Activated CD4-positive, alpha-beta memory T cell treated with anti-CD3 and anti-CD28 coated beads for 36 hours (primary cell): ENCODE measurements at regions of chr14 and their contacts with region 1.

Region 1: GRCh38 chr14:92585981-92586937 is 72.7 kb downstream of the RIN3 start:
- DNase-seq: peak; percentile 34
- H3K4me3 Mint-ChIP-seq: peak overlapping the region; percentile 25
- H3K27ac Mint-ChIP-seq: peak overlapping the region; percentile 66
- H3K4me1 Mint-ChIP-seq: peaks cover 69% of the 10 kb centered on the region
- H3K27me3 Mint-ChIP-seq: no peaks in the 10 kb centered on the region

Region 2: GRCh38 chr14:92340931-92341330 is 245.3 kb before region 1 on chr14:
- CTCF ChIA-PET with region 1: no interaction called
- POLR2A ChIA-PET with region 1: no interaction called
- intact Hi-C with region 1: loop called (anchors 2 kb)
- DNase-seq: peak; percentile 86
- H3K4me3 Mint-ChIP-seq: peak overlapping the region; percentile 28
- H3K27ac Mint-ChIP-seq: peak overlapping the region; percentile 83
- H3K4me1 Mint-ChIP-seq: peaks cover 29% of the 10 kb centered on the region
- H3K27me3 Mint-ChIP-seq: peaks cover 56% of the 10 kb centered on the region

Region 3: GRCh38 chr14:92426191-92426590 is 160.1 kb before region 1 on chr14:
- CTCF ChIA-PET with region 1: no interaction called
- POLR2A ChIA-PET with region 1: no interaction called
- intact Hi-C with region 1: no loop called
- DNase-seq: no peak
- H3K4me3 Mint-ChIP-seq: no peak overlapping the region
- H3K27ac Mint-ChIP-seq: no peak overlapping the region
- H3K4me1 Mint-ChIP-seq: peaks cover 4% of the 10 kb centered on the region
- H3K27me3 Mint-ChIP-seq: peaks cover 2% of the 10 kb centered on the region

Region 4: GRCh38 chr14:92450351-92451070 is 135.7 kb before region 1 on chr14:
- CTCF ChIA-PET with region 1: no interaction called
- POLR2A ChIA-PET with region 1: no interaction called
- intact Hi-C with region 1: no loop called
- DNase-seq: no peak
- H3K4me3 Mint-ChIP-seq: no peak overlapping the region
- H3K27ac Mint-ChIP-seq: no peak overlapping the region
- H3K4me1 Mint-ChIP-seq: no peaks in the 10 kb centered on the region
- H3K27me3 Mint-ChIP-seq: no peaks in the 10 kb centered on the region

Region 5: DNA sequence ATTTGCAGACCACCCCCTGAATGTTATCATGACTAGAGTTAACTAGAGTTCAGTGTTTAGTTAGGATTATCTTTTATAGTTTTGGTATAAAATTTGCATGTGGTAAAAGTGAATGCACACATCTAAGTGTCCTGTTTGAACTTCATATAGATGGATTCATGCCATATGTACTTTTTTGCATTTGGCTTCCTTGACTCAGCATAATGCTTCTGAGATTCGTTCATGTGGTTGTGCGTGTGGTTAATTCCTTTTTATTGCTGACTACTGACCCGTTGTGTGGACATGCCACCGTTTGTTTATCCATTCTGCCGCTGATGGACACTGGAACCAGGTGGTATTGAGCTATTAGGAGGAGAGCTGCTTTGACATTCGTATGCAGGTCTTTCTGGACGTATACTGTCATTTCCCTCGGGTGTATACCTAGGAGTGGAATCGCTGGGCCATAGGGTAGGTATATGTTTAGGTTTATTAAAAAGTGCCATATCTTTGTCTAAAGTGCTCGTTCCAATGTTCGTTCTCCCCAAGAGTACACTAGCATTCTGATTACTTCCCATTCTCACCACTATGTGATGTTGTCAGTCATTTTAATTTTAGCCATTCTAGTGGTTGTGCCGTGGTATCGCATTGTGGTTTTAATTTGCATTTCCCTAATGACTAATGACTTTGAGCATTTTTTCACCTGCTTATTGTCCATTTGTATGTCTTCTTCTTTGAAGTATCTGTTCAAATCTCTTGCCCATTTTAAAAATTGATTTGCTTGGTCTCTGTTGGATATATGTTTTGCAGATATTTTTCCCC is 35.0 kb before region 1 on chr14:
- CTCF ChIA-PET with region 1: interaction called, 3 read pairs
- POLR2A ChIA-PET with region 1: interaction called, 3 read pairs
- intact Hi-C with region 1: loop called (anchors 5 kb)
- DNase-seq: no peak
- H3K4me3 Mint-ChIP-seq: no peak overlapping the region
- H3K27ac Mint-ChIP-seq: no peak overlapping the region
- H3K4me1 Mint-ChIP-seq: peaks cover 24% of the 10 kb centered on the region
- H3K27me3 Mint-ChIP-seq: peaks cover 4% of the 10 kb centered on the region

Region 6: GRCh38 chr14:92563359-92563758 is 22.9 kb before region 1 on chr14:
- CTCF ChIA-PET with region 1: no interaction called
- POLR2A ChIA-PET with region 1: interaction called, 6 read pairs
- intact Hi-C with region 1: loop called (anchors 1 kb)
- DNase-seq: peak; percentile 33
- H3K4me3 Mint-ChIP-seq: no peak overlapping the region
- H3K27ac Mint-ChIP-seq: no peak overlapping the region
- H3K4me1 Mint-ChIP-seq: peaks cover 23% of the 10 kb centered on the region
- H3K27me3 Mint-ChIP-seq: no peaks in the 10 kb centered on the region

Region 7: GRCh38 chr14:92633274-92633616 is 47.0 kb after region 1 on chr14:
- CTCF ChIA-PET with region 1: no interaction called
- POLR2A ChIA-PET with region 1: no interaction called
- intact Hi-C with region 1: no loop called
- DNase-seq: no peak
- H3K4me3 Mint-ChIP-seq: no peak overlapping the region
- H3K27ac Mint-ChIP-seq: no peak overlapping the region
- H3K4me1 Mint-ChIP-seq: peaks cover 5% of the 10 kb centered on the region
- H3K27me3 Mint-ChIP-seq: no peaks in the 10 kb centered on the region

Region 8: DNA sequence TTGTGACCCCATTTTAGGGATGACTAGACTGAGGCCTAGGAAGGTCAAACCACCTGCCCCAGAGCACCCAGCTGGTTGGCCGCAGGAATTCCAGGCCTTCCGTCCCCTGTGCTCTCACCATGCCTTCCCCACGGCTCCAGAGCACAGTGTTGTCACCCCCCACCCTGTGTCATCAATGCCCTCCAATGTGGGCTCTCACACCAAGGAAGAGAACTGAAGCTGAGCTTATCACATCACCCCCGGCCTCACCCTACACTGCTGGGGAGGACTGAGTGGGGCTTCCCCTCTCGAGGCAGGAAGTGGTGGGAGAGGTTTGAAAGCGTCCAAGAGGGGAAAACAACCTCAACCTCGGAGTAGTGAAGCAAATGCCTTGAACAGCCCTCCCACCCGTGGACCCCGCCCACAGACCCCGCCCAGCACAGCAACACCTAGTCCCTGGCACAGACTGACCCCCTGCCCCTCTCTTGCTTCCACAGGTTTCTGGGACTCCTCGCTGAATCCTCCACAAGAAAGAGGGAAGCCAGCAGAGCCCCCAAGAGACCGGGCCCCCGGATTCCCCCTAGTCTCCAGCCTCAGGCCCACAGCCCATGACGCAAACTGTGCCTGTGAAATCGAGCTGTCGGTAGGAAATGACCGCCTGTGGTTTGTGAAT is 65.0 kb after region 1 on chr14:
- CTCF ChIA-PET with region 1: interaction called, 5 read pairs
- POLR2A ChIA-PET with region 1: interaction called, 3 read pairs
- intact Hi-C with region 1: loop called (anchors 2 kb)
- DNase-seq: peak; percentile 90
- H3K4me3 Mint-ChIP-seq: peak overlapping the region; percentile 93
- H3K27ac Mint-ChIP-seq: peak overlapping the region; percentile 97
- H3K4me1 Mint-ChIP-seq: peaks cover 77% of the 10 kb centered on the region
- H3K27me3 Mint-ChIP-seq: no peaks in the 10 kb centered on the region

Region 9: DNA sequence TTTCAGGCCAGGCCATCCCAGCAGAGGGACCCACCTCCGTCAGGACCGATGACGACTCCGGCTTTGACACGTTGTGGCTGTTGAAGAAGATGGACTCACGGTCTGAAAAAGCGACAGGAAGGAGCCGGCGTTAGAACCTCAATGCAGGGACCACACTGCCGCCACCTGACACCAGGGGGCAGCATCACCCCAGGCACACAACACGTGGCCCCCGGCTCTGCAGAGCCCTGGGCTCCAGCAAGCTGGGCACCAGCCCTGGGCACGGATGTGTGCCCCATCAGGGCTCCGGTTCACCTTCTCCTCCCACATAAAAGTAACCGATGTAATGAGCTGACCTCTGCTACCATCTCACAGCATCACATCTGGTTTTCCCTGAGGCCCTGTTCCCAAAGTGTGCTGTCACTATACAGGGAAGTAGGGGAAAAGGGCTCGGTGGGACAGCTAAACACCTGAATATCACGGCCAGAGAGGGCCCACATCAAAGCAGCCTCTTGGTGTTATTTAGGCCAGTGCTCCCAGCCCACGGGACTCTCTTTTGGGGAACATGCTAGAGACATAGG is 365.7 kb after region 1 on chr14:
- CTCF ChIA-PET with region 1: no interaction called
- POLR2A ChIA-PET with region 1: no interaction called
- intact Hi-C with region 1: no loop called
- DNase-seq: peak; percentile 88
- H3K4me3 Mint-ChIP-seq: no peak overlapping the region
- H3K27ac Mint-ChIP-seq: no peak overlapping the region
- H3K4me1 Mint-ChIP-seq: peaks cover 4% of the 10 kb centered on the region
- H3K27me3 Mint-ChIP-seq: no peaks in the 10 kb centered on the region